ENCODE measurements at regions of chr7 and their contacts with region 1.

Region 1: DNA sequence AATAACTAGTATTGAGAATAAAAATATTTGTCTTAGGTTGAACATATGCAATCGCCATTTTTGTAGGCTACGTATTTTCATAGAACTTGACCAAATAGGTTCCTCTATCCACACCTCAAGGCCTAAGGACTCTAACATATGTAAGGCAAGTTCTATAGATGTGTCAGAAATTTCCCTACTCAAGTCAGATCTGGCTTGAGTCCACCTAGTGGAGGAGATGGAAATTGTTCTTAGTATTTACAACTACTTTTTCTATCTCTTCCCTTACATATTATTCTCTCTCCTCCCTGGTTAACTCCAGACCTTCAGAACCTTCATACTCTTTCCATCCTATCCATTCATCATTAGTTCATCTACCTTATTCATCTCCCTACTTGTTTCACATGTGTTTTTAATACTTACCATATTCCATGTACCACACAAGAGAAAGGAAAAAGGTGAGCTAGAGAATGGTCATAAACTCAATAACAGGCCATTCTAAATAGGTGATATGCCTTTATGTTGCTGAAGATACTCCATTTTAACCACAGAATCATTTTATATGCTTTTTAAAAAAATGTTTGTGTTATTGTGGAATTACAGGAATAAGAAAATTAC is 174.5 kb upstream of the HDAC9 start:
- DNase-seq: peak; percentile 37
- H3K4me3 Mint-ChIP-seq: no peak overlapping the region
- H3K27ac Mint-ChIP-seq: no peak overlapping the region
- H3K4me1 Mint-ChIP-seq: peaks cover 16% of the 10 kb centered on the region
- H3K27me3 Mint-ChIP-seq: no peaks in the 10 kb centered on the region
- CTCF ChIP-seq: peak; percentile 82

Region 2: DNA sequence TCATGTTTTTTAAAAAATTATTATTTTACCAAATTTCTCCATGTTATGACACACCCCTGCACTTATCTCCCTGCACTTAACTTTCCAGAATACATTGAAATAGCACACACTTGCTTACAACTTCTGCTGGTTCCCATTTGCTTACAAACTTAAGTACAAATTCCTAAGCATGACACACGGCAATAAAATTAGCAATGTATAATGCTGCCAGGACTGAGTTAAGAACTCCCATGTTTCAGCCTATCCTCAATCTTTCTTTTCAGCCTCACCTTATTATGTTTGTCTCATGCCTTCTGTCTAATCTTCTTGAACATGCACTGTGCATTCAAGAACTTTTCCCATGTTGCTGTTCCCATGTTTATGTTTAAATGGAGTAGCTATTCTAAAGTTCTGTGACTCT is 334.2 kb before region 1 on chr7:
- CTCF ChIA-PET with region 1: interaction called, 4 read pairs
- intact Hi-C with region 1: loop called (anchors 1 kb)
- DNase-seq: no peak
- H3K4me3 Mint-ChIP-seq: peak overlapping the region; percentile 2
- H3K27ac Mint-ChIP-seq: peak overlapping the region; percentile 41
- H3K4me1 Mint-ChIP-seq: peaks cover 57% of the 10 kb centered on the region
- H3K27me3 Mint-ChIP-seq: no peaks in the 10 kb centered on the region
- CTCF ChIP-seq: no peak

Region 3: GRCh38 chr7:18086165-18087030 is 234.7 kb before region 1 on chr7:
- CTCF ChIA-PET with region 1: no interaction called
- intact Hi-C with region 1: loop called (anchors 2 kb)
- DNase-seq: peak; percentile 73
- H3K4me3 Mint-ChIP-seq: peak overlapping the region; percentile 97
- H3K27ac Mint-ChIP-seq: peak overlapping the region; percentile 74
- H3K4me1 Mint-ChIP-seq: peaks cover 30% of the 10 kb centered on the region
- H3K27me3 Mint-ChIP-seq: no peaks in the 10 kb centered on the region
- CTCF ChIP-seq: peak; percentile 44

Region 4: GRCh38 chr7:18125476-18125875 is 195.6 kb before region 1 on chr7:
- CTCF ChIA-PET with region 1: interaction called, 3 read pairs
- intact Hi-C with region 1: loop called (anchors 2 kb)
- DNase-seq: no peak
- H3K4me3 Mint-ChIP-seq: no peak overlapping the region
- H3K27ac Mint-ChIP-seq: peak overlapping the region; percentile 55
- H3K4me1 Mint-ChIP-seq: peaks cover 51% of the 10 kb centered on the region
- H3K27me3 Mint-ChIP-seq: no peaks in the 10 kb centered on the region
- CTCF ChIP-seq: no peak

Region 5: GRCh38 chr7:18177815-18178660 is 143.0 kb before region 1 on chr7:
- CTCF ChIA-PET with region 1: no interaction called
- intact Hi-C with region 1: loop called (anchors 5 kb)
- DNase-seq: peak; percentile 88
- H3K4me3 Mint-ChIP-seq: peak overlapping the region; percentile 57
- H3K27ac Mint-ChIP-seq: peak overlapping the region; percentile 92
- H3K4me1 Mint-ChIP-seq: peaks cover 65% of the 10 kb centered on the region
- H3K27me3 Mint-ChIP-seq: no peaks in the 10 kb centered on the region
- CTCF ChIP-seq: no peak

Region 6: DNA sequence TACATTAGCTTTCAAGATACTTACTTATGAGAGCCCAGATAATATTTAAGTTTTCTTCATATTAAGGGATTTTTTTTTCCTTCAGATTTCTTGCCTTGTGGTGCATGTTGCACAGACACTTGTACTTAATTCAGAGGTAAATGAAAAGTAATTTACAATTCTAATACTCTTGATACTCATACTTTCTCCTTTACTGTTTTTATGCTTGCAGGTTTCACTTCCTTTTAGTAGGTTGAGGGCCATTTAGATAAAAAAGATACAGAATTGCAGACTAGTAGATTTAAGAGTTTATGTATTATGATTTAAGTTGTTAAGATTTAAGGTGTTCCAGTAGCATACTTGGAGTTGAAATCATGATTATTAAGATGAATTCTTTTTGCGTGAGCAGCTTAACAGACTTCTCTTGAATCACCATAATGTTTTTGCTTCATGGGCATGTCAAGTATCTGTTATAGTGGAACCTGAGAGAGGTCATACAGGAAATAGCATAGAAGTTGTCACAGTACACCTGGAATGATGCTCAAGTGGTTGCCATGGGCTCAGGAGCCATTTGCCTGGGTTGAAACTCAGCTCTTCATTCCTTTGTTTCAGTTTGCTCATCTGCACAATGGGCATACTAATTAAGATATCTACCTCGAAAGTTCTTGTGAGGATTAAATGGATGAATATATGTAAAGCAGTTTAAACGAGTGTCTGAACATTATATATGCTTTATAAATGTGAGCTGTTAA is 118.6 kb before region 1 on chr7:
- CTCF ChIA-PET with region 1: no interaction called
- intact Hi-C with region 1: no loop called
- DNase-seq: no peak
- H3K4me3 Mint-ChIP-seq: no peak overlapping the region
- H3K27ac Mint-ChIP-seq: no peak overlapping the region
- H3K4me1 Mint-ChIP-seq: peaks cover 31% of the 10 kb centered on the region
- H3K27me3 Mint-ChIP-seq: no peaks in the 10 kb centered on the region
- CTCF ChIP-seq: no peak

Region 7: DNA sequence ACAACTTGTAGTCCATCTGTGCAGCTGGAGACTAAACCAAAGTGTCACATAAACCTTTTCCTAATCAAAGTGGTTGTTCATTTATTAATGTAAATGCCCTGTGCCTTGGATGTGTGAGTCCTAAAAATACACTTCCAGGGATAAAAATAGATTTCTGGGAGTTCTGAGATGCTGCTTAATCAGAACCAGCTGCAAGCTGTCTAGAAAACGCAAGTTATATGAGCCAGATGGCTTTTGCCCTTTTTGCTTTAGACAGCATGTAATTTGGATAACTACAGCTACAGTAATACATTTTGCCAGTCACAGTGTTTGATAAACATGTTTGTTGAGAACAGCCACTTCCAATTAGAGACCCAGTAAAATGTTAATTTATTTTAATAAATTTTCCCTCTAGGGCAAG is 108.3 kb before region 1 on chr7:
- CTCF ChIA-PET with region 1: no interaction called
- intact Hi-C with region 1: loop called (anchors 10 kb)
- DNase-seq: no peak
- H3K4me3 Mint-ChIP-seq: no peak overlapping the region
- H3K27ac Mint-ChIP-seq: no peak overlapping the region
- H3K4me1 Mint-ChIP-seq: no peaks in the 10 kb centered on the region
- H3K27me3 Mint-ChIP-seq: no peaks in the 10 kb centered on the region
- CTCF ChIP-seq: no peak

Region 8: GRCh38 chr7:18276383-18276782 is 44.7 kb before region 1 on chr7:
- CTCF ChIA-PET with region 1: no interaction called
- intact Hi-C with region 1: no loop called
- DNase-seq: no peak
- H3K4me3 Mint-ChIP-seq: no peak overlapping the region
- H3K27ac Mint-ChIP-seq: no peak overlapping the region
- H3K4me1 Mint-ChIP-seq: no peaks in the 10 kb centered on the region
- H3K27me3 Mint-ChIP-seq: no peaks in the 10 kb centered on the region
- CTCF ChIP-seq: no peak

Region 9: DNA sequence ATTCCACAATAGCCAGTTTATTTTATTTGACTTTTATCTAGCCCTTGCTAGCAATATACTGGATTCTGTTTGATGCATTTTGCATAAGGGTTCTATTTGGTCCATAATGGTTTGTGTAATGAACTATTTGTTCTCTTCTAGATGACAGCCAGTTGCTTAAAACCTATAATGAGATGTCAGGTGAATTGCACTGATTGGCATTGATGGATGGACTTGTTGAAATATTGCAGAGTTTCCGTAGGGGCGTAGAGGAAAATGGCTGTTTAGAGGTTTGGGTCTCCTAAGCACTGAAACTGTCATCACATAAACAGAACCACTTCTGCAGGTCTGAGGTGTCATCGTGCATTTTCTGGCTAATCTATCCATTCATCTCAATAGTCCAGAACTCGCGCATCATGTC is 49.6 kb after region 1 on chr7:
- CTCF ChIA-PET with region 1: no interaction called
- intact Hi-C with region 1: no loop called
- DNase-seq: no peak
- H3K4me3 Mint-ChIP-seq: no peak overlapping the region
- H3K27ac Mint-ChIP-seq: no peak overlapping the region
- H3K4me1 Mint-ChIP-seq: no peaks in the 10 kb centered on the region
- H3K27me3 Mint-ChIP-seq: no peaks in the 10 kb centered on the region
- CTCF ChIP-seq: no peak

Measured in Calu3 (cell line).